ENCODE measurements at regions of chr14 and their contacts with region 1.

Region 1: GRCh38 chr14:65287264-65288131 is 125.0 kb upstream of the FUT8 start:
- DNase-seq: peak; percentile 75
- ATAC-seq: peak; percentile 59
- H3K4me3 ChIP-seq: peak overlapping the region in 3 of 5 experiments; percentile 3 to 38 (median 16)
- H3K4me3 Mint-ChIP-seq: peak overlapping the region; percentile 70
- H3K27ac ChIP-seq: peak overlapping the region; percentile 89 to 95
- H3K27ac Mint-ChIP-seq: peak overlapping the region; percentile 95
- H3K4me1 ChIP-seq: peaks cover 75 to 87% of the 10 kb centered on the region in 2 donors
- H3K4me1 Mint-ChIP-seq: peaks cover 81% of the 10 kb centered on the region
- H3K27me3 ChIP-seq: no peaks in the 10 kb centered on the region
- H3K27me3 Mint-ChIP-seq: no peaks in the 10 kb centered on the region
- CTCF ChIP-seq: no peak

Region 2: GRCh38 chr14:65229751-65230749 is 57.4 kb before region 1 on chr14:
- CTCF ChIA-PET with region 1: interaction called, 75 read pairs
- POLR2A ChIA-PET with region 1: interaction called, 3 read pairs
- intact Hi-C with region 1: loop called (anchors 1 kb)
- DNase-seq: peak; percentile 59
- ATAC-seq: peak; percentile 50
- H3K4me3 ChIP-seq: peak overlapping the region; percentile 36 to 60 (median 58)
- H3K4me3 Mint-ChIP-seq: peak overlapping the region; percentile 90
- H3K27ac ChIP-seq: peak overlapping the region; percentile 74 to 83
- H3K27ac Mint-ChIP-seq: peak overlapping the region; percentile 95
- H3K4me1 ChIP-seq: peaks cover 63 to 71% of the 10 kb centered on the region in 2 donors
- H3K4me1 Mint-ChIP-seq: peaks cover 58% of the 10 kb centered on the region
- H3K27me3 ChIP-seq: no peaks in the 10 kb centered on the region
- H3K27me3 Mint-ChIP-seq: no peaks in the 10 kb centered on the region
- CTCF ChIP-seq: no peak

Region 3: DNA sequence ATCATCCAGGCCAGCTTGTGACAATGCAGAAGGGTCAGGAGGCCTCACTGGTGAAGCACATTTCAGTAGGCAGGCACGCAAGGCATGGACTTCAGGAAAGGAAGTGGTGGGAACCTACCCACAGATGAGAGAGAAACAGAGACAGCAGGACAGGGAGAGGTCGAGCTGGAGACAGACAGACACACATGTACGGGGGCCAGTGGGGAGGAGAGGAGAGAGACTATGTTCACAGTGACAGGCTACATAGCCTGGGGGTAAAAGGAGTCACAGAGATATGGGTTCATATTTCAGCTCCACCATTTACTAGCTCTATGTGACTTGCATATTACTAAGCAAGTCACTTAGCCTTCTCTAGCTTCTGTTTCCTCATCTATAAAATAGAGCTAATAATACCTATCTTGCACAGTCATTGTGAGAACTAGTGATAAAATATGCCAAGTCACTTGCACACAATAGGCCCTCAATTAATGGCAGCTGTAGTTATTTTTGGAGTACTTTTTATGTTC is 33.9 kb after region 1 on chr14:
- CTCF ChIA-PET with region 1: interaction called, 8 read pairs
- POLR2A ChIA-PET with region 1: interaction called, 22 read pairs
- intact Hi-C with region 1: loop called (anchors 1 kb)
- DNase-seq: no peak
- ATAC-seq: no peak
- H3K4me3 ChIP-seq: peak overlapping the region in 1 of 5 experiments; percentile 0
- H3K4me3 Mint-ChIP-seq: peak overlapping the region; percentile 3
- H3K27ac ChIP-seq: peak overlapping the region; percentile 39 to 45
- H3K27ac Mint-ChIP-seq: peak overlapping the region; percentile 26
- H3K4me1 ChIP-seq: peaks cover 64 to 72% of the 10 kb centered on the region in 2 donors
- H3K4me1 Mint-ChIP-seq: peaks cover 75% of the 10 kb centered on the region
- H3K27me3 ChIP-seq: no peaks in the 10 kb centered on the region
- H3K27me3 Mint-ChIP-seq: no peaks in the 10 kb centered on the region
- CTCF ChIP-seq: no peak

Region 4: GRCh38 chr14:65356327-65356852 is 68.9 kb after region 1 on chr14:
- CTCF ChIA-PET with region 1: interaction called, 11 read pairs
- POLR2A ChIA-PET with region 1: no interaction called
- intact Hi-C with region 1: loop called (anchors 1 kb)
- DNase-seq: no peak
- ATAC-seq: no peak
- H3K4me3 ChIP-seq: no peak overlapping the region
- H3K4me3 Mint-ChIP-seq: no peak overlapping the region
- H3K27ac ChIP-seq: peak overlapping the region; percentile 40 to 61
- H3K27ac Mint-ChIP-seq: peak overlapping the region; percentile 79
- H3K4me1 ChIP-seq: peaks cover 58 to 84% of the 10 kb centered on the region in 2 donors
- H3K4me1 Mint-ChIP-seq: peaks cover 73% of the 10 kb centered on the region
- H3K27me3 ChIP-seq: no peaks in the 10 kb centered on the region
- H3K27me3 Mint-ChIP-seq: no peaks in the 10 kb centered on the region
- CTCF ChIP-seq: no peak

Region 5: GRCh38 chr14:65824285-65824977 is 536.9 kb after region 1 on chr14:
- CTCF ChIA-PET with region 1: interaction called, 21 read pairs
- POLR2A ChIA-PET with region 1: no interaction called
- intact Hi-C with region 1: loop called (anchors 5 kb)
- DNase-seq: peak; percentile 80
- ATAC-seq: peak; percentile 98
- H3K4me3 ChIP-seq: no peak overlapping the region
- H3K4me3 Mint-ChIP-seq: no peak overlapping the region
- H3K27ac ChIP-seq: no peak overlapping the region
- H3K27ac Mint-ChIP-seq: no peak overlapping the region
- H3K4me1 ChIP-seq: peaks cover 0 to 2% of the 10 kb centered on the region in 2 donors
- H3K4me1 Mint-ChIP-seq: peaks cover 3% of the 10 kb centered on the region
- H3K27me3 ChIP-seq: no peaks in the 10 kb centered on the region
- H3K27me3 Mint-ChIP-seq: peaks cover 3% of the 10 kb centered on the region
- CTCF ChIP-seq: peak; percentile 98

Measured in B cell (primary cell).